CD4-positive, alpha-beta memory T cell (primary cell): ENCODE measurements at regions of chr1 and their contacts with region 1.

Region 1: GRCh38 chr1:192808518-192809306 is at the start of gene RGS2:
- DNase-seq: peak; percentile 86 to 89 (median 87)
- H3K4me3 ChIP-seq: peak within 1 kb of the TSS; percentile 89 to 97
- H3K4me3 Mint-ChIP-seq: peak within 1 kb of the TSS; percentile 92 to 99 (median 98)
- H3K27ac ChIP-seq: peak within 1 kb of the TSS; percentile 66
- H3K27ac Mint-ChIP-seq: peak within 1 kb of the TSS; percentile 94 to 99 (median 97)
- H3K4me1 ChIP-seq: peaks cover 36% of the 10 kb centered on the region
- H3K4me1 Mint-ChIP-seq: peaks cover 26 to 42% (median 32%) of the 10 kb centered on the region in 4 donors
- H3K27me3 ChIP-seq: no peaks in the 10 kb centered on the region
- H3K27me3 Mint-ChIP-seq: peaks cover 0 to 2% of the 10 kb centered on the region in 2 donors
- total RNA-seq, gene RGS2: 26.4 to 27.9 TPM

Region 2: DNA sequence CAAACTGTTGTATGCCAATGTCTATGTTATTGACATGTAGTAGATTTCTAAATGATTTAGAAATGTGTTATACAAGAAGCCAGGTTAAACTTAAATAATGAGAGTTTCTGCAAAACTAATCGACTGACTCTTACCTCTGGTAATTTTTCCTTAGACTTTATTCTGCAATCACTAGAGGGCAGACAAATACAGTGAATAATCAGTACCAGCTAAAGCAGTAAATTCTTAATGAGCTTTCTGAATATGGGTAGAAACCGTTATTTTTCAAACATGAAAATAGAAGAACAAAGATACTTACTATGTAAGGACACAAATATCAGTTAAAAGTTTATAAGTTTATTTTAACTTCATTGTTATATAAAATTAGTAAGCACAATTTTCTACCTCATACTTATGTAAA is 331.1 kb before region 1 on chr1:
- CTCF ChIA-PET with region 1: interaction called, 11 read pairs
- POLR2A ChIA-PET with region 1: interaction called, 6 read pairs
- intact Hi-C with region 1: loop called (anchors 1 kb)
- DNase-seq: peak in 4 of 5 donors; percentile 47 to 52 (median 48)
- H3K4me3 ChIP-seq: no peak overlapping the region
- H3K4me3 Mint-ChIP-seq: no peak overlapping the region
- H3K27ac ChIP-seq: no peak overlapping the region
- H3K27ac Mint-ChIP-seq: peak overlapping the region in 1 of 7 donors; percentile 19
- H3K4me1 ChIP-seq: no peaks in the 10 kb centered on the region
- H3K4me1 Mint-ChIP-seq: no peaks in the 10 kb centered on the region
- H3K27me3 ChIP-seq: no peaks in the 10 kb centered on the region
- H3K27me3 Mint-ChIP-seq: peaks cover 0 to 6% of the 10 kb centered on the region in 2 donors

Region 3: DNA sequence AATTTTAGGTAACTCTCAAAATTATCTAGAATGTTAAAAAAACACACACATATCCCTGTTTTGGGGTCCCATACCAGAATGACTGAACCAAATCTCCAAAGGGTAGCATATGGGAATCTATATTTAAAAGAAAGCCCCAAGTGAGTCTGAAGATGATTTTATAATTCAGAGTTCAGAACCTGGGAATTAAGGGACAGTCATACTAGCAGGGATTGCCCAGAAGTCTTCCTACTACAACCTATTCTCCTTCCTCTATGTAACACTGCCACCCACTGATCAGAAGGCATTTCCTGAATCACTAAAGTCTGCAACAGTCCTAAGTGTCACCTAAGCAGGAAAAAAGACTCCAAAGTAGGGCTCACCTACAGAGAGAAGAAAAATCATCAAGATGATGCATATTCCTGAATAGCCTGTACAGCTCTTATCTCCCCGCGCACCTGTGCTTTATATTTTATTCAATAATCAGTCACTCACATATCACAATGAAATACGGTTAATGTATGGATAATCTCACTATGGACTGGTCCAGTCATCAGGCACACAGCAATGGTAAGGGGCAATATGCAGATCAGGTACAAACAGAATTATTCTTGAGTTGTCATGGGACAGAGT is 228.3 kb before region 1 on chr1:
- CTCF ChIA-PET with region 1: no interaction called
- POLR2A ChIA-PET with region 1: no interaction called
- intact Hi-C with region 1: loop called (anchors 1 kb)
- DNase-seq: peak in 4 of 5 donors; percentile 29 to 51 (median 42)
- H3K4me3 ChIP-seq: no peak overlapping the region
- H3K4me3 Mint-ChIP-seq: no peak overlapping the region
- H3K27ac ChIP-seq: no peak overlapping the region
- H3K27ac Mint-ChIP-seq: peak overlapping the region in 2 of 7 donors; percentile 8 to 23
- H3K4me1 ChIP-seq: peaks cover 46% of the 10 kb centered on the region
- H3K4me1 Mint-ChIP-seq: peaks cover 28 to 45% (median 35%) of the 10 kb centered on the region in 4 donors
- H3K27me3 ChIP-seq: no peaks in the 10 kb centered on the region
- H3K27me3 Mint-ChIP-seq: peaks cover 0 to 2% of the 10 kb centered on the region in 2 donors

Region 4: GRCh38 chr1:192797891-192798290 is 10.8 kb before region 1 on chr1:
- CTCF ChIA-PET with region 1: interaction called, 16 read pairs
- POLR2A ChIA-PET with region 1: interaction called, 3 read pairs
- intact Hi-C with region 1: no loop called
- DNase-seq: no peak
- H3K4me3 ChIP-seq: no peak overlapping the region
- H3K4me3 Mint-ChIP-seq: no peak overlapping the region
- H3K27ac ChIP-seq: no peak overlapping the region
- H3K27ac Mint-ChIP-seq: no peak overlapping the region
- H3K4me1 ChIP-seq: no peaks in the 10 kb centered on the region
- H3K4me1 Mint-ChIP-seq: no peaks in the 10 kb centered on the region
- H3K27me3 ChIP-seq: no peaks in the 10 kb centered on the region
- H3K27me3 Mint-ChIP-seq: no peaks in the 10 kb centered on the region

Region 5: DNA sequence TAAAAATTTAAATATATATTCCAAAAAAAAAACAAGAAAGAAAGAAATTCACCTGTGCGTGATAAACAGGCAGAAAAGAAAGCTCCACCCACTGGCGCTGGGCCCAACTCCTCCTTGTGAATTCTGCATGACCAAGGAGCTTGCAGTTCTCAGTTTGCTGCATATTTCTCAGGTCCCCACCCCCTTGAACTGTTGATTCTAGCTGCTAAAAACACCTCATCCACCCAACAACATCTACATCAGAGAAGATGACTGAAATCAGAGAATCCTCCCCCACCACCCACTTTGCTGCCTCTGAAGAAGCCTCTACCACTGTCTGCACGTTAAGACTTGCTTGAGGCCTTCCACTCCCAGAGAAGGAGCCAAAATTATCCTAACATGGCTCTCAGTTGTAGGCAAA is 105.0 kb after region 1 on chr1:
- CTCF ChIA-PET with region 1: no interaction called
- POLR2A ChIA-PET with region 1: no interaction called
- intact Hi-C with region 1: no loop called
- DNase-seq: no peak
- H3K4me3 ChIP-seq: no peak overlapping the region
- H3K4me3 Mint-ChIP-seq: no peak overlapping the region
- H3K27ac ChIP-seq: no peak overlapping the region
- H3K27ac Mint-ChIP-seq: no peak overlapping the region
- H3K4me1 ChIP-seq: no peaks in the 10 kb centered on the region
- H3K4me1 Mint-ChIP-seq: no peaks in the 10 kb centered on the region
- H3K27me3 ChIP-seq: no peaks in the 10 kb centered on the region
- H3K27me3 Mint-ChIP-seq: peaks cover 0 to 7% of the 10 kb centered on the region in 2 donors

Region 6: DNA sequence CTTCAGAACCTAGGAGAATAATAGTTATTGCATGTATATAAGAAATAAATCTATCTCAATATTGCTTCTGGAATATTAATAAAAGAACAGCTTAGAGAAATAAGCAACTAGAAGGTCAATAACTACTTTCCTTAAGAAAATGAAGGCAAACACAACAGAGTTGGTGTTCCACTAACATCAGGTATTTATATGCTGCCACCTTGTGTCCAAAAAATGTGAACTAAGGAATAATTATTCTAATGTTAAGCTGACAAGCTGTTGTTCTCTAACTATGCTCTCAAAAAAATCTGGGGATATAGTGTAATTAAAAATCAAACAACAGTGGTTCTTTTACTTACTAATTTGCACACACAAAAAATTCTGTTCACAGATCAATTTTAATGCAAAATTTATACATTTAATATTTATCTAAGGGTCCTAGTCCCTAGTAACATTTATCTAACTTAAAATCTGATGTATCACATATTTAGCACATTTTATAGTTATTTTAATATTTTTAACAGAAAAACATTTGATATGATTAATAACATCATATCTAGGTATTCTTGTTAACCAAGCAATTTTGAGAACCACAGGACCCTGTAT is 210.8 kb after region 1 on chr1:
- CTCF ChIA-PET with region 1: interaction called, 219 read pairs
- POLR2A ChIA-PET with region 1: interaction called, 33 read pairs
- intact Hi-C with region 1: loop called (anchors 1 kb)
- DNase-seq: peak in 4 of 5 donors; percentile 39 to 45 (median 42)
- H3K4me3 ChIP-seq: no peak overlapping the region
- H3K4me3 Mint-ChIP-seq: no peak overlapping the region
- H3K27ac ChIP-seq: no peak overlapping the region
- H3K27ac Mint-ChIP-seq: no peak overlapping the region
- H3K4me1 ChIP-seq: no peaks in the 10 kb centered on the region
- H3K4me1 Mint-ChIP-seq: no peaks in the 10 kb centered on the region
- H3K27me3 ChIP-seq: no peaks in the 10 kb centered on the region
- H3K27me3 Mint-ChIP-seq: no peaks in the 10 kb centered on the region

Region 7: GRCh38 chr1:193059268-193060225 is 250.8 kb after region 1 on chr1 and contains the starts of genes RO60 and UCHL5:
- CTCF ChIA-PET with region 1: interaction called, 28 read pairs
- POLR2A ChIA-PET with region 1: interaction called, 65 read pairs
- intact Hi-C with region 1: loop called (anchors 1 kb)
- DNase-seq: peak; percentile 94 to 97 (median 96)
- H3K4me3 ChIP-seq: peak within 1 kb of the TSS; percentile 73 to 91
- H3K4me3 Mint-ChIP-seq: peak within 1 kb of the TSS; percentile 90 to 100 (median 99)
- H3K27ac ChIP-seq: peak within 1 kb of the TSS; percentile 89
- H3K27ac Mint-ChIP-seq: peak within 1 kb of the TSS; percentile 95 to 100 (median 99)
- H3K4me1 ChIP-seq: peaks cover 60% of the 10 kb centered on the region
- H3K4me1 Mint-ChIP-seq: peaks cover 41 to 79% (median 59%) of the 10 kb centered on the region in 4 donors
- H3K27me3 ChIP-seq: no peaks in the 10 kb centered on the region
- H3K27me3 Mint-ChIP-seq: peaks cover 0 to 1% of the 10 kb centered on the region in 2 donors
- total RNA-seq, gene RO60: 75.2 to 78.7 TPM
- total RNA-seq, gene UCHL5: 31.2 to 34.6 TPM

Region 8: DNA sequence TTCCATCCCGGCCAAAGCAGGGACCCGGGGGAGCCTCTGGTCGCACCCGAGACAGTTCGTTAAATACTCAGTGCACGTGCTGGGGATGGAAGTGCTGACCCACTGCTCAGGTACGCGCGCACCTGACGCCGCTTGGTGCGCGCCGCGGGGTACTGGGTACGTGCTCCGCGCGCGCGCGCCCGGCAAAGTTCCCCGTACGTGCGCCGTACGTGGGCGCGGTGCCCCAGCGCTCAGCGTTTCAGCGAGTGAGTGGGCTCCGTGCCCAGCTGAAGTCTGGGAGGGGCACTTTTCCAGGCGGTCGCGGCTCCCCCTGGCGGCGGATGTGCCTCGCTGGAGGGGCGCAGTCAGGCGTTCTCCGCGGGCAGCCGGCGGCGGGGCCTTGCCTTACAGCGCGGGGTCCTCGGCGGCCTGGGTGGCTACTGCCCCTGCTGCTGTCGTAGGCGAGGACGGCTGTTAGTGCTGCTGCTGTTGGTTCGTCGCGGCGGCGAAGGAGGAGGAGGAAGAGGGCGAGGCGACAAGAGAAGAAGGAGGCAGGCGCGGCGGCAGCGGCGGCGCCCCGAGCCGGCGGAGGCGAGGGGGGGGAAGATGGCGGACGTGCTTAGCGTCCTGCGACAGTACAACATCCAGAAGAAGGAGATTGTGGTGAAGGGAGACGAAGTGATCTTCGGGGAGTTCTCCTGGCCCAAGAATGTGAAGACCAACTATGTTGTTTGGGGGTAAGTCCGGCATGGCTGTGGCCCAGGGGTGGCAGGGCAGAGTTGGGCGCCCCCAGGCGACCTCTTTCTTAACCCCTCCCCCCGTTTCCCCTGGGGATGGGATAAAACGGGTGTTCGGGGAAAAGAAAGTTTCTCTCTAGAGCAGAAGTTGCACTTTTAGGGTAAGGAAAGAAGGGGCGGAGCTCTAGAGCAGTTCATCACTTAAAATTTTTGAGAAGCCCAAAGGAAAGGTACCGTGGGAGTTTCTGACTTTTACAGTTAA is 313.2 kb after region 1 on chr1 and contains the start of gene CDC73:
- CTCF ChIA-PET with region 1: interaction called, 34 read pairs
- POLR2A ChIA-PET with region 1: interaction called, 34 read pairs
- intact Hi-C with region 1: loop called (anchors 1 kb)
- DNase-seq: peak; percentile 98 to 100 (median 99)
- H3K4me3 ChIP-seq: peak within 1 kb of the TSS; percentile 68 to 89
- H3K4me3 Mint-ChIP-seq: peak within 1 kb of the TSS; percentile 90 to 98 (median 94)
- H3K27ac ChIP-seq: peak within 1 kb of the TSS; percentile 80
- H3K27ac Mint-ChIP-seq: peak within 1 kb of the TSS; percentile 93 to 98 (median 98)
- H3K4me1 ChIP-seq: peaks cover 45% of the 10 kb centered on the region
- H3K4me1 Mint-ChIP-seq: peaks cover 27 to 72% (median 43%) of the 10 kb centered on the region in 4 donors
- H3K27me3 ChIP-seq: no peaks in the 10 kb centered on the region
- H3K27me3 Mint-ChIP-seq: no peaks in the 10 kb centered on the region
- total RNA-seq, gene CDC73: 70.4 to 75.0 TPM